T-cell (primary cell): ENCODE measurements at regions of chr17 and their contacts with region 1.

Region 1: DNA sequence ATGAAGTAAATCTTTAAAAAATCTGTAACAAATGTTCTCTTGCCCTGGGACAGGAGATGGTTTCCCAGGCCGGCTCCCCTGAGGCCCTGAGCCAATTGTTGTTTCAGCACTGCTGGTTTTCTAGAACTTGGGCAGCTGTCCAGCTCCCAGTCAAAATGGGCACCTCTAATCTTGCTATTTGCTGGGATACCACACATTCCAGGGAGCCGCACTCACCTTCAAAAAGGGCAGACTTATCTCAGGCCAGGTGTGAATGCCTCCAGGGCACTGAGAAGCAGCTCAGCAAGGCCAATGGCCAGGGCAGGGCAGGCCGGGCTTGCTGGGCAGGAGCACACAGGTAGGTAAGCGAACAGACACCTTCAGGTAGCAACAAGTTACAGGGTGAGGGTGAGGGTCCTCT is 24.4 kb downstream of the TRIM16 start:
- DNase-seq: no peak
- ATAC-seq: no peak
- H3K4me3 ChIP-seq: no peak overlapping the region
- H3K4me3 Mint-ChIP-seq: no peak overlapping the region
- H3K27ac ChIP-seq: no peak overlapping the region
- H3K27ac Mint-ChIP-seq: no peak overlapping the region
- H3K4me1 ChIP-seq: no peaks in the 10 kb centered on the region
- H3K4me1 Mint-ChIP-seq: no peaks in the 10 kb centered on the region
- H3K27me3 ChIP-seq: no peaks in the 10 kb centered on the region
- H3K27me3 Mint-ChIP-seq: no peaks in the 10 kb centered on the region

Region 2: GRCh38 chr17:15998031-15998562 is 338.4 kb after region 1 on chr17:
- CTCF ChIA-PET with region 1: interaction called in 1 of 2 experiments, 12 read pairs
- POLR2A ChIA-PET with region 1: no interaction called
- DNase-seq: no peak
- ATAC-seq: no peak
- H3K4me3 ChIP-seq: no peak overlapping the region
- H3K4me3 Mint-ChIP-seq: peak overlapping the region in 2 of 3 donors; percentile 84 to 98
- H3K27ac ChIP-seq: no peak overlapping the region
- H3K27ac Mint-ChIP-seq: peak overlapping the region; percentile 96
- H3K4me1 ChIP-seq: peaks cover 8 to 27% of the 10 kb centered on the region in 2 experiments
- H3K4me1 Mint-ChIP-seq: peaks cover 34 to 43% (median 41%) of the 10 kb centered on the region in 3 donors
- H3K27me3 ChIP-seq: no peaks in the 10 kb centered on the region
- H3K27me3 Mint-ChIP-seq: no peaks in the 10 kb centered on the region